ENCODE measurements at regions of chr9 and their contacts with region 1.

Region 1: GRCh38 chr9:133121198-133121939 is at the start of gene RALGDS:
- DNase-seq: peak; percentile 56 to 94
- H3K4me3 ChIP-seq: peak within 1 kb of the TSS; percentile 65 to 85
- H3K27ac ChIP-seq: peak within 1 kb of the TSS; percentile 86 to 87
- H3K4me1 ChIP-seq: peaks cover 7 to 29% of the 10 kb centered on the region in 2 donors
- H3K27me3 ChIP-seq: no peaks in the 10 kb centered on the region
- CTCF ChIP-seq: no peak
- total RNA-seq, gene RALGDS: 53.9 TPM

Region 2: GRCh38 chr9:132457504-132458236 is 663.7 kb before region 1 on chr9:
- intact Hi-C with region 1: no loop called
- DNase-seq: no peak
- H3K4me3 ChIP-seq: no peak overlapping the region
- H3K27ac ChIP-seq: no peak overlapping the region
- H3K4me1 ChIP-seq: no peaks in the 10 kb centered on the region
- H3K27me3 ChIP-seq: peaks cover 6% of the 10 kb centered on the region
- CTCF ChIP-seq: no peak

Region 3: DNA sequence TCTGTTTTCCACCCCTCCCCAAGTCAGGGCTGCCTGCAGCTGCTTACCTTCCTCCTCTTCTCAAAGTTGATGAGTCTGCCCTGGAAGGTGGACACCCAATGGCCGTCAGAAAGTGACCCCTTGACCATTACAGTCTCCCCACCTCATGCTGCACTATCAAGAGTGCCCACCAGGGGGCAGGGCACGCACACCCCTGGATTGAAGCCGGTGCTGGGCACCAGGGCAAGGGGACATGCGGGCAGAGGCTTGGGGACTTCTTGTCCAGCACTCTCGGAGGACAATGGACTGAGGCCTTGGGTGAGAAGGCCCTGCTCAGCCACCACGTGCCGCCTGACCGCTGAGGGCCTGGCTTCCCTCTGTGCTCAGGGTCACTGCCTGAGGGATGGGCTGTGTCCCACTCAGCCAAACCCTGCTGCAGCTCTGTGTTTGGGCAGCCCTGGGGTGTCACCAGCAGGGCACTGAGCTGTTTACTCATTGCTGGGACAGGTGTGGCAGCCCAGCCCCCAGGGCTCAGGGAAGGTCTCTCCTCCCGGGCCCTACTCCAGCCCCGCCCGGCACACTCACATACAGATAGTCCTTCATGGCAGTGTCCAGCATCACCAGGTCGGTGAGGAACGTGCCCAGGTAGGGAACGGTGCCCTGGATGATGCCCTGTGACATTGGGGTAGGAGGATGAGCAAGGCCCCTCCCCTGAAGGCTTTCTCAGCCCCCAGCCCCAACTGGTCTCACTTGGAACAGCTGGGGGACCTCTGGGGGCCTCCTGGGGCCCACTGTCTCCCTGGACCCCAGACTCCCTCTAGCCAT is 18.0 kb before region 1 on chr9:
- intact Hi-C with region 1: loop called (anchors 2 kb)
- DNase-seq: peak in 1 of 2 donors; percentile 61
- H3K4me3 ChIP-seq: no peak overlapping the region
- H3K27ac ChIP-seq: no peak overlapping the region
- H3K4me1 ChIP-seq: no peaks in the 10 kb centered on the region
- H3K27me3 ChIP-seq: no peaks in the 10 kb centered on the region
- CTCF ChIP-seq: peak; percentile 95 to 98 (median 95)

Region 4: DNA sequence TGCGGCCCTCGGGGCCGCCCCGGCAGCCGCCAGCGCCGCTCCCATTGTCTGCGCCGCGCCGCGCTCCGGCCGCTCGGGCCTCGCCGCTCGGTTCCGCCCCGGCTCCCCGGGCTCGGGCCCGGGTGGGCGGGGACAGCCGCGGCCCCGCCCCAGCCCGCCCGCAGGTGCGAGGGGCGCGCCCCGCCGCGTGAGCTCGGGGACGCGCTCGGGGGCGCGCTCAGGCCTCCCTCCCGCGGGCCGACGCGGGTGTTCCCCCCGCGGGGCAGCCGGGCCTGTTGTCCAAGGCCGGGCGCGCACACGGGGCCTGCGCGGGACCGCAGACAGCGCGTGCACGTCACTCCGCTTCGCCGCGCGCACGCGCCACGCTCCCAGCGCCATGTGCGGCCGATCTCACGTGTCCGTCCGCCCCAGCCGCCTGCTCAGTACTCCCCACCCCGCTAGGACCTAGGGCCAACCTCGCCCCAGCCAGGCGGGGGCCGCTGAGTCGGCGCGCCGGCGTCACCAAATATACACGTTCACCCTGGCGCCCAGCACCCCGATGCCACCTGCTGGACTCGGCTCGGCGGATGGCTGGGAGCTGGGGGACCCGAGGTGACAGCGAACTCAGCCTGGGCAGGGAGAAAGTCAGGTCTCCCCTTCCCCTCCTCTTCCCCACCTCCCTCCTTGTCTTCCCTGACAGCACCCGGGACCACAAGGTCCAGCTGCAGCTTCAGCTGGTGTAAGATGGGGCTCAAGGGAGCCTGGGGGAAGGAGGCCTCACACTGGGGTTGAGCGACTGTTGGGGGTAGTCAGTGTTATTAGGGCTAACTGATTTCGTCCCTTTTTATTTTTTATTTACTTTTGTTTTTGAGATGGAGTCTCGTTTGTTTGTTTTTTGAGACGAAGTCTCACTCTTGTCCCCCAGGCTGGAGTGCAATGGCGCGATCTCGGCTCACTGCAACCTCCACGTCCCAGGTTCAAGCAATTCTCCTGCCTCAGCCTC is 28.0 kb after region 1 on chr9:
- intact Hi-C with region 1: loop called (anchors 1 kb)
- DNase-seq: peak; percentile 77 to 94
- H3K4me3 ChIP-seq: peak overlapping the region; percentile 81 to 84
- H3K27ac ChIP-seq: peak overlapping the region; percentile 72 to 83
- H3K4me1 ChIP-seq: peaks cover 6 to 23% of the 10 kb centered on the region in 2 donors
- H3K27me3 ChIP-seq: no peaks in the 10 kb centered on the region
- CTCF ChIP-seq: peak in 2 of 3 experiments; percentile 24 to 37

Region 5: DNA sequence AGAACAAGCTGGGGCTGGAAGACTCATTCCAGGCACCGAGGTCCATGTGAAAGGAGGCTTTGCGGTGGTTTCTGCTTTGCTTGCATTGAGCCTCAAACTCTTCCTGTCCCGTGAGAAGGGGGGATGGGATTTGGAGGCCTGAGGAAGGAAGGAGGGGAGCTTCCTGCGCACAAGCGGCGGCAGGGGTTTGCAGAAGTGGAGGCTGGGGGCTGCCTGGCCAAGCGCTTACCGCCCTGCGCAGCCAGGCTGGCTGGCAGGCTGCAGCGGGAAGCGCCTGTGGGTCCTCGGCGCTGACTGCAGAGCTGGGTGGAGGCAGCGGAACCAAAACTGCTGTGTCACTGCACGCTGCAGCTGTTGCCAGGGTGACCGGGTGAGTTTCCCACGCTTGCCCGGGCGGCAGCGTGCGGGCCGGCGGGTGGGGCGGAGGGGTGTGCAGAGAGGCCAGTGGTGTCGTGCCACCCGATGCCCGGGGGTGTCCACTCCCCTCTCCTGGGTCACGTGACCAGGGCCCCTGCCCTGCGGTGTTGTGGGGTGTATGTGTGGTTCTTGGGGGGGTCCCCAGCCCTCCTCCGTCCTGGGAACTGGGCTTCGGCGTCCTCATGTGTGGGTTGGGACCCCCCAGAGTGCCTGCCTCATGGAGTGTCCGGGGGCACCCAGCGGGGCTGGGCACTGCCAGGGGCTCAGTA is 1285.9 kb after region 1 on chr9:
- intact Hi-C with region 1: no loop called
- DNase-seq: peak; percentile 66 to 94
- H3K4me3 ChIP-seq: peak overlapping the region; percentile 27 to 54
- H3K27ac ChIP-seq: peak overlapping the region; percentile 74 to 82
- H3K4me1 ChIP-seq: peaks cover 58 to 77% of the 10 kb centered on the region in 2 donors
- H3K27me3 ChIP-seq: no peaks in the 10 kb centered on the region
- CTCF ChIP-seq: no peak

Measured in ascending aorta (tissue), 2 donors.